Colonic mucosa (tissue), 4 donors: ENCODE measurements at regions of chr20 and their contacts with region 1.

Region 1: GRCh38 chr20:45801851-45802250 is 10.1 kb downstream of the DNTTIP1 start:
- DNase-seq: no peak
- H3K4me3 ChIP-seq: no peak overlapping the region
- H3K27ac ChIP-seq: no peak overlapping the region
- H3K4me1 ChIP-seq: no peaks in the 10 kb centered on the region
- H3K27me3 ChIP-seq: no peaks in the 10 kb centered on the region
- CTCF ChIP-seq: no peak

Region 2: GRCh38 chr20:45957081-45957941 is 155.5 kb after region 1 on chr20:
- intact Hi-C with region 1: no loop called
- DNase-seq: no peak
- H3K4me3 ChIP-seq: no peak overlapping the region
- H3K27ac ChIP-seq: no peak overlapping the region
- H3K4me1 ChIP-seq: no peaks in the 10 kb centered on the region
- H3K27me3 ChIP-seq: no peaks in the 10 kb centered on the region
- CTCF ChIP-seq: no peak

Region 3: DNA sequence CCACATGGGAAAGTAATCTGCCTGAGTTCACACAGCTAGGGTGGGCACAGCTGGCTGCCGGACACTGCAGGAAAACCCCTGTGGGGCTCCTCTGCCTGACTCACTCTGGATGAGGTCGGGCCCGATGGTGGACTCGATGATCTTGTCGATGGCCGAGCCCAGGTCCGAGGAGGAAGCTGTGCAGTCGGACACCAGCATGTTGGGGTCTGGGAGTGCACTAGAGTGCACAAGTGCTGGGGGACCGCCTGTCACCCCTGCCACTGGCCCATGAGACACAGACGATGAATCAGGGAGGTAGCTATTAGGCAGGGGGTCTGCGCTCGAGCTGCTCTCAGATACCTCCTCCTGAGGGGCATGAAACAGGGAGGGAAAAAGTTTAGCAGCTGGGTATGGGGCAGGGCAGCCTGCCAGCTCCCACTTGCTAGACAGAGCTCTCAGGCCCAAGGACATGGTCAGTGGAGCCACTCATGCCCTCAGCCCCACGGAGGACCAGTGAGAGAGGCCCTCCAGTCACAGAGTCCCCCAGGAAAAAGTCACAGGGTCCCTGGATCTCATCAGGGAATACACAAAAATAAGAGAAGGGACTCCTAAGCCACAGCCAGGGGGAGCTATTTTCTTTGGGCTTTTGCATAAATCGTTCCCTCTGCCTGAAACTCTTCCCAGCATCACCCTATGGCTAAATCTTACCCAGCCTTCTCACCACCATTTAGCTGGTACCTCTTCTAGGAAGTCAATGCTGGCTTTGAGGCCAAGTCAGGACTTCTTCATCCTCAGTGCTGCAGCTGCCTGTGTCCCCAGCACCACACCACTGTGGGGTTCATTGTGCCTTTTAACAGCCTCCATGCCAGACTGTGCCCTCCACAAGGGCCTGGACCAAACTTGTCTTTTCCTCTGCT is 167.7 kb after region 1 on chr20:
- intact Hi-C with region 1: loop called (anchors 5 kb)
- DNase-seq: peak; percentile 56
- H3K4me3 ChIP-seq: no peak overlapping the region
- H3K27ac ChIP-seq: no peak overlapping the region
- H3K4me1 ChIP-seq: peaks cover 8% of the 10 kb centered on the region
- H3K27me3 ChIP-seq: no peaks in the 10 kb centered on the region
- CTCF ChIP-seq: peak; percentile 48